ENCODE measurements at regions of chr3 and their contacts with region 1.

Region 1: GRCh38 chr3:72847751-72848702 is at the start of gene SHQ1:
- DNase-seq: peak; percentile 95
- H3K4me3 ChIP-seq: peak within 1 kb of the TSS; percentile 90 to 99 (median 96)
- H3K27ac ChIP-seq: peak within 1 kb of the TSS; percentile 73
- H3K4me1 ChIP-seq: peaks cover 26% of the 10 kb centered on the region
- H3K27me3 ChIP-seq: no peaks in the 10 kb centered on the region
- CTCF ChIP-seq: no peak
- total RNA-seq, gene SHQ1: 17.0 to 23.0 TPM

Region 2: GRCh38 chr3:72862314-72863090 is 14.5 kb after region 1 on chr3:
- CTCF ChIA-PET with region 1: interaction called, 23 read pairs
- dilution Hi-C with region 1: no loop called
- in situ Hi-C with region 1: no loop called
- intact Hi-C with region 1: no loop called
- DNase-seq: no peak
- H3K4me3 ChIP-seq: no peak overlapping the region
- H3K27ac ChIP-seq: no peak overlapping the region
- H3K4me1 ChIP-seq: no peaks in the 10 kb centered on the region
- H3K27me3 ChIP-seq: no peaks in the 10 kb centered on the region
- CTCF ChIP-seq: no peak

Region 3: GRCh38 chr3:72916249-72916648 is 68.2 kb after region 1 on chr3:
- CTCF ChIA-PET with region 1: no interaction called
- dilution Hi-C with region 1: no loop called
- in situ Hi-C with region 1: no loop called
- intact Hi-C with region 1: no loop called
- DNase-seq: no peak
- H3K4me3 ChIP-seq: no peak overlapping the region
- H3K27ac ChIP-seq: no peak overlapping the region
- H3K4me1 ChIP-seq: no peaks in the 10 kb centered on the region
- H3K27me3 ChIP-seq: no peaks in the 10 kb centered on the region
- CTCF ChIP-seq: no peak

Region 4: GRCh38 chr3:72938471-72939265 is 90.6 kb after region 1 on chr3:
- CTCF ChIA-PET with region 1: no interaction called
- dilution Hi-C with region 1: no loop called
- in situ Hi-C with region 1: no loop called
- intact Hi-C with region 1: loop called (anchors 1 kb)
- DNase-seq: peak; percentile 63
- H3K4me3 ChIP-seq: no peak overlapping the region
- H3K27ac ChIP-seq: no peak overlapping the region
- H3K4me1 ChIP-seq: peaks cover 9% of the 10 kb centered on the region
- H3K27me3 ChIP-seq: no peaks in the 10 kb centered on the region
- CTCF ChIP-seq: peak; percentile 39 to 61

Region 5: DNA sequence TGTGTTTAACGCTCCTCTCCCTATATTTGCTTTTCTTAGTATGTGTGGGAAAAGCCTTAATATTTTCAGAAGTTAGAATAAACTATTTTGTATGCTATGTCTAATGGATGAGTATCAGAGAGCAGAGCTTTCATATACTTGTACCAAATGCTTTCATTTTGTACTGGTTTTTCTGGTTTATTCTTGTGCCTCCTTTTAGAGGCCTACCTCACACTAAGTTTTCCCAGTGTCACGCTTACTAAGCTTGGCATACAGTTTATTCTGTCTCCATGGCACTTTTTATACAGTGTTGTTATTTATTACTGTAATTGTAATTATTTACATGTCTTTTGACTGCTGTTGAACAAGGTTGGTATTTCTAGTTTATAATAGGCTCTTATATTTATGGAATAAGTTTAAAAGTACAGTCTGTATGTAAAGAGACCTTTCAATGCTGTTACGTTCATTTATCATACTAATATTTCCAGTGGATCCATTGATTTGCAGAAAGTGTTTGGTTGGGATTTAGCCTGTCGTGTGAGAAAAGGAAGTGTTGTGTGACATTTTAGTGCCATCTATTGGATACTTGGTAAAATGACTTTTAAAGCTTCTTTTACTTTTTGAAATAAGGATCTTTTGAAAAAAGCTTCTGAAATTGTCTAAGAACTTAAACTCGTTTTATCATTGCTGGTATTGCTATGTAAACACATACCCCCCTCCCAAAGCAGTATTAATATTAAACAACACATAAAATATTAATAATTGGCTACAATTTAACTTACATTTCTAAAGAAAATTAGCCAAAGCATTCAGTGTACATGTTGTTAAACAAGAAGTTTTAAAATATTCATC is 208.2 kb after region 1 on chr3:
- CTCF ChIA-PET with region 1: interaction called, 11 read pairs
- dilution Hi-C with region 1: no loop called
- in situ Hi-C with region 1: loop called in 1 of 2 experiments (anchors 10 kb)
- intact Hi-C with region 1: loop called (anchors 1 kb)
- DNase-seq: peak; percentile 19
- H3K4me3 ChIP-seq: no peak overlapping the region
- H3K27ac ChIP-seq: peak overlapping the region; percentile 57
- H3K4me1 ChIP-seq: no peaks in the 10 kb centered on the region
- H3K27me3 ChIP-seq: no peaks in the 10 kb centered on the region
- CTCF ChIP-seq: peak; percentile 46 to 48

Region 6: DNA sequence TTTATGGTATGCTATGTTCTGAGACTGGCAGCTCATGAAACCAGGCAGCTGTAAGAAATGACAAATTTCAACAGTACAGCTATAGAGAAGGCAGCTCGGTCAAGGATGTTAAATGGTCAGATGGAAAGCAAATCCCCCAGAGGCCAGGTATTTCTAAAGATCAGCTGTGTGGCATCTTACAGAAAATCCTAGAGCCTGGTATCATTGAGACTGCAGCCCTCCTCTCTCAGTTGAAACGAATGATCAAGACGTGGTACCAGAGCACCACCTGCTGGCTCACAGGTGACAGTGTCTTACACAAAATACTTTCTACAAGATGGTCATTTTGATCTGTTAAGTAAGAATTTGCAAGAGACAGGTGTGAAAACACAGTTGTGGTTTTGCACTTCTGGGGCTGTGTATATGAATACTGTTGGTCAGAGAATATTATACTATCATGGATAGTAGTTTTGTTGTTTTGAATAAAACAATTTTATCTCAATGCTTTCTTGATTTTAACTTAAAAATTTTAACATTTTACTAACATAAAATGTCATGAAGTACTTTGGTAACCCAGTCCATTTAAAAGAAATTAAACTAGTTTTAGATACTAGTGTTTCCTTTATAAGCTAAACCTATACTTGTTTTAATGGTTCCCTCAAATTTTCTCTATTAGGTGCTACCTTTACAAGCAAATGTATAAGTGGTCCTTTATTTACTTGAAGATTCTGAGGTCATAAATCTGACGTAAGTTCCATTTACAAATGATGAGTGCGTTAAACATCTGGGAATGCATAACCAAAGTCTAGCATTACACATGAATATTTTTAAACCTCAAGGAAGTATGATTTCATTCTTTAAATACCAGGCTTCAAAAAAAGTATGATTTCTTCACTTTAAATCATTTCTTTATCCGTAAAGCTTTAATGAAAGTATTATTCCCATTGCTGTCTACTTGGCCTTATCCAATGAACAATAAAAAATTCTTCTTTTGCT is 654.9 kb after region 1 on chr3:
- CTCF ChIA-PET with region 1: no interaction called
- dilution Hi-C with region 1: no loop called
- in situ Hi-C with region 1: no loop called
- intact Hi-C with region 1: loop called (anchors 5 kb)
- DNase-seq: peak; percentile 41
- H3K4me3 ChIP-seq: no peak overlapping the region
- H3K27ac ChIP-seq: no peak overlapping the region
- H3K4me1 ChIP-seq: no peaks in the 10 kb centered on the region
- H3K27me3 ChIP-seq: no peaks in the 10 kb centered on the region
- CTCF ChIP-seq: peak; percentile 78 to 92